ENCODE measurements at regions of chr19 and their contacts with region 1.

Region 1: GRCh38 chr19:9584073-9584833 is at the start of gene ZNF121:
- DNase-seq: peak; percentile 90
- ATAC-seq: peak; percentile 85
- H3K4me3 ChIP-seq: peak within 1 kb of the TSS; percentile 88
- H3K27ac ChIP-seq: peak within 1 kb of the TSS; percentile 79
- H3K4me1 ChIP-seq: no peaks in the 10 kb centered on the region
- H3K27me3 ChIP-seq: no peaks in the 10 kb centered on the region
- CTCF ChIP-seq: no peak
- total RNA-seq, gene ZNF121: 52.6 and 65.6 TPM in 2 replicates

Region 2: GRCh38 chr19:8832132-8833021 is 751.9 kb before region 1 on chr19 and contains the starts of genes MBD3L1 and ZNF558:
- CTCF ChIA-PET with region 1: no interaction called
- POLR2A ChIA-PET with region 1: no interaction called
- intact Hi-C with region 1: loop called (anchors 5 kb)
- DNase-seq: peak; percentile 98
- ATAC-seq: peak; percentile 87
- H3K4me3 ChIP-seq: peak within 1 kb of the TSS; percentile 87
- H3K27ac ChIP-seq: peak within 1 kb of the TSS; percentile 83
- H3K4me1 ChIP-seq: peaks cover 9% of the 10 kb centered on the region
- H3K27me3 ChIP-seq: peaks cover 11% of the 10 kb centered on the region
- CTCF ChIP-seq: peak; percentile 56
- total RNA-seq, gene MBD3L1: not detected in 2 replicates
- total RNA-seq, gene ZNF558: 32.4 and 36.5 TPM in 2 replicates

Region 3: DNA sequence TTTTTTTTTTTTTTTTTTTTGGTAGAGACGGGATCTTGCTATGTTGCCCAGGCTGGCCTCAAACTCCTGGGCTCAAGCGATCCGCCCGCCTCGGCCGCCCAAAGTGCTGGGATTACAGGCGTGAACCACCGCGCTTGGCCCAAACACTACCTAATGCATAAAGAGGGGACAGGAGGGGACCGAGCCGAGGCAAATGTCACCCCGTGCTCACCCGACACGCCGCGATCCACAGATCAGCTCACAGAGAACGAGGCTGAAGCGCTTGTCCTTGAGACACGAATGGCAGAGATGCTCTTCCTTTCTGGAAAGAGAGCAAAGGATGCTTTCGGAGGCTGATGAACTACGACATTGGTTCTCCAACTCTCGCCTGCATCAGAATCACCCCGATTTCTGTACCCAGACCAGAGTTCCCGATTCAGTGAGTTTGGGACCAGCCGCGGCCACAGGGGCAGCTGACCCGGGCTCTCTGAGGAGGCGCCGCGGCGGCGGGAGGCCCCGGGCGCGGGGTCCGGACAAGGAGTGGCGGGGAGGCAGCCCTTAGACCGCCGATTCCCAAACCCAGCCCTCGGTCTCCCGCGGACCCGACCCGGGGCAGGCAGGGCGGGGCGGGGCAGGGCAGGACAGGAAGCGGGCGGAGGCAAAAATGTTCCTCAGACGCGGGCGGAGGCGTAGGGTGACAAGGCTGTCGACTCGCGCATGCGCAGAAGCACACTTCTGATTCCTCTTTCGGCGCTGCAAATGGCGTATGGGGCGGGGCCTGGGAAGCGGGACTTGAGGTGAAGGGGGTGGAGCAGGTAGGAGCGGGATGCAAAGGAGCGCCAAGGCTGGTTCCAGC is 274.9 kb before region 1 on chr19 and contains the start of gene ZNF699:
- CTCF ChIA-PET with region 1: no interaction called
- POLR2A ChIA-PET with region 1: no interaction called
- intact Hi-C with region 1: loop called (anchors 1 kb)
- DNase-seq: peak; percentile 100
- ATAC-seq: peak; percentile 79
- H3K4me3 ChIP-seq: peak within 1 kb of the TSS; percentile 97
- H3K27ac ChIP-seq: peak within 1 kb of the TSS; percentile 88
- H3K4me1 ChIP-seq: peaks cover 12% of the 10 kb centered on the region
- H3K27me3 ChIP-seq: no peaks in the 10 kb centered on the region
- CTCF ChIP-seq: no peak
- total RNA-seq, gene ZNF699: 30.9 and 36.0 TPM in 2 replicates

Region 4: DNA sequence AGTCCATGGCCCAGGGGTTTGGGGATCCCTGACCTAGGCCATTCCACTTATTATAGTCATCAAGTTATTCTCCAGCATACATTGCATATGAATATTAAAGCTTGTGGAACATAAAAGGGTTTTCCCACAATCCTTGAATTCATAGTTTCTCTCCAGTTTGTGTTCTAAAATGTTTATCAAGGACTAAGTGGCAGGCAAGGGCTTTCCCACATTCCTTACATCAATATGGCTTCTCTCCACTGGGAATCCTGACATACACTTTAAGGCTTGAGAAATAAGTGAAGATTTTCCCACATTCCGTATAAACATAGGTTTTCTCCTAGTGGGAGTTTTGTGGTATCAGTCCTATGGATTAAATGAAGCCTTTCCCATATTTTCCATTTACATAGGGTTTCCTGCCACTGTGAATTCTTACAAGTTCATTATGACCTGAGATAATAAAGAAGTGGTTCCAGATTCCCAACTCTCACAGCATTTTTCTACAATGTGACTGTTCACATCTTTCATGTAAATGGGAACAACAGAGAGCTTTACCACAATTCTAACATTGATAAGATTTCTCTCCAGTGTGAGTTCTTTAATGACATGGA is 60.3 kb before region 1 on chr19:
- CTCF ChIA-PET with region 1: no interaction called
- POLR2A ChIA-PET with region 1: no interaction called
- intact Hi-C with region 1: no loop called
- DNase-seq: no peak
- ATAC-seq: no peak
- H3K4me3 ChIP-seq: peak overlapping the region; percentile 10; the same call in 1 of the 2 replicates
- H3K27ac ChIP-seq: no peak overlapping the region
- H3K4me1 ChIP-seq: no peaks in the 10 kb centered on the region
- H3K27me3 ChIP-seq: no peaks in the 10 kb centered on the region
- CTCF ChIP-seq: no peak

Region 5: GRCh38 chr19:9621156-9622037 is 37.1 kb after region 1 on chr19 and contains the start of gene ZNF561:
- CTCF ChIA-PET with region 1: no interaction called
- POLR2A ChIA-PET with region 1: no interaction called
- intact Hi-C with region 1: loop called (anchors 1 kb)
- DNase-seq: peak; percentile 79
- ATAC-seq: peak; percentile 83
- H3K4me3 ChIP-seq: peak within 1 kb of the TSS; percentile 86
- H3K27ac ChIP-seq: peak within 1 kb of the TSS; percentile 73
- H3K4me1 ChIP-seq: no peaks in the 10 kb centered on the region
- H3K27me3 ChIP-seq: no peaks in the 10 kb centered on the region
- CTCF ChIP-seq: no peak
- total RNA-seq, gene ZNF561: 20.1 and 23.3 TPM in 2 replicates

Region 6: GRCh38 chr19:9796113-9796773 is 212.0 kb after region 1 on chr19:
- CTCF ChIA-PET with region 1: no interaction called
- POLR2A ChIA-PET with region 1: no interaction called
- intact Hi-C with region 1: loop called (anchors 1 kb)
- DNase-seq: peak; percentile 98
- ATAC-seq: peak; percentile 56
- H3K4me3 ChIP-seq: peak overlapping the region; percentile 30; the same call in 1 of the 2 replicates
- H3K27ac ChIP-seq: no peak overlapping the region
- H3K4me1 ChIP-seq: peaks cover 16% of the 10 kb centered on the region
- H3K27me3 ChIP-seq: no peaks in the 10 kb centered on the region
- CTCF ChIP-seq: peak; percentile 98

Measured in PC-3 (cell line).